ENCODE measurements at regions of chr17 and their contacts with region 1.

Region 1: GRCh38 chr17:54559883-54560282 is 340.8 kb upstream of the TOM1L1 start:
- DNase-seq: no peak
- ATAC-seq: no peak

Region 2: DNA sequence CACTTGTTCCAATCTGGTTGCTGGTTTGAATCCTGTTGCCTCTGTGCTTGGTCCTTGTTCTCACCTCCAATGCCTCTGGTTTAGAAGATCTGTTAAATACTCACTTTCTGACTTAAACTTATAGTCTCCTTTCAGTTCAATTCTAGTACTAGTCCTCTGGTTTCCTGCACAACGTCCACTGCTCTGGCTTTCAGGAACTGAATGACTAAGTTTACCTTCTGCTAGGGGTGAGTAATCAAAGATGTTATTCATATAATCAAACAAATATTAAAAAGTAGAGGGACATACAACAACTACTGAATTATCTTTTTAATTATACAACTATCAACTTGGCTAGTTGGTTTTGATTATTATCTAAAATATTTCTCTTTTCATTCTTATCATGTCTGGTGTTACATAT is 155.6 kb before region 1 on chr17:
- intact Hi-C with region 1: no loop called
- DNase-seq: no peak
- ATAC-seq: no peak

Region 3: DNA sequence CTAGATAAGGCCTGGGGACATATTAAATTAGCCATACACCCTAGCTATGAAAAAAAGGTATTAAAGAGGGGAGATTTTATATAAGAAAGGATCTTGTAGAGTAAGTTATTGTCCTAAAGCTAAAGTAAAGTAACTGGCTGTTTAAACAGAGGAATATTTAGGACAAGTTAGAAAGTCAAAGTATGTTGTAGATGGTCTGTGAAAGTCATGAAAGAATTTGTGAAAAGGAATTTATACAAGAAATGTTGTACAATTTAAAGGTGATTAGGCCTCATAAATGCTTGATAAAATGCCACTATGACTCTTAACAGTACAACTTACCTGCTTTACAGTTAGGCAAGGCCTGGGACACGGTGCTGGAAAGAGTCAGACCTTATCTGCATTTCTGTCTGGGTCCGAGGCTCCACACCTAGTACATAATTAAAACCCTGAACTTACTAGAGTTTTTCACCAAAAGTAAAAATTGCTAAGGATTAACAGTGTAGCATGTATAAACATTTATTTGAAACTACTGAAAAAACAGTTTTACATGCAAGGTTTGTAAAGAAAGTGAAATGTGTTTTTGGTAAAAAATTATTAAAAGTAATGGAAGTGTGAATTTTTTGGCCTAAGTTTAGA is 104.5 kb before region 1 on chr17:
- intact Hi-C with region 1: loop called (anchors 10 kb)
- DNase-seq: no peak
- ATAC-seq: no peak

Region 4: GRCh38 chr17:54505404-54505803 is 54.5 kb before region 1 on chr17:
- intact Hi-C with region 1: no loop called
- DNase-seq: no peak
- ATAC-seq: no peak